ENCODE measurements at regions of chr5 and their contacts with region 1.

Region 1: DNA sequence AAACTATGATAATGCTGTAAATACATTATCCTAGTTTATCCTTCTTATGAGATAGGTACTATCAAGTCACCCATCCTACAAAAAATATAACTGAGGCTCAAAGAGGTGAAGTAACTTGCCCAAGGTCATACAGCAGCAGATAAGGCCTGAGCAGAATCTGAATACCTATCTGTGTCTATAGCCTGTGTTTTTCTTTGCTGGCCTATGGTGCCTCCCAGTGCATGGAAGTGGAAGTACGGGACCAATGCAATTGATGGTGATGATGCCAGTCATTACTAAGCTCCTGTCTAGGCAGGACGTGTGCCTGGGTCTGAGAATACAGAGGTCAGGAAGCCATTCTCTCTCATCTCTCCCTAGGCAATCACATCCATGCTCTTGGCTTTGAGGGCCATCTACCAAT is 67.8 kb downstream of the FAT2 start:
- DNase-seq: peak; percentile 15 to 69
- H3K4me3 ChIP-seq: no peak overlapping the region
- H3K27ac ChIP-seq: no peak overlapping the region
- H3K4me1 ChIP-seq: no peaks in the 10 kb centered on the region
- H3K27me3 ChIP-seq: no peaks in the 10 kb centered on the region
- CTCF ChIP-seq: peak; percentile 62 to 94 (median 89)
- EP300 ChIP-seq: no peak
- POLR2A ChIP-seq: no peak
- RAD21 ChIP-seq: peak; percentile 95 to 97

Region 2: DNA sequence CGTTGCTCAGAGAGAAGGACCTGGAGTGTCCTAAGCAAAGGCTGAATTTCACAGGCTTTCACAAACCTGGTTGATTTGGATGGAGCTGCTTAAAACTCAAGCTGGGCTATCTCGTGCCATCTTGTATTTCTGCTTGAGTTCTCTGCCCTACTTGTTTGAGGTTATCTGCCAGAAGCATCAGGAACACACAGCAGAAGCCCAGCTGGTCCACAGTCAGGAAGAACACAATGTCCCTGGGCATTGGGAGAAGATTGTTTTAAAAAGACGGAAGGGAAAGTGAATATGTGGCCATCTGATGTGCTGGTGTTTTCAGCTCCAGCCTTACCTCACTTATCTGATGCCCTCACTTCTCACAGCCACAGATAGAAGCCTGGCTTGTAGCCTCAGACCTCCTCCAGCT is 108.8 kb before region 1 on chr5:
- CTCF ChIA-PET with region 1: no interaction called
- POLR2A ChIA-PET with region 1: no interaction called
- DNase-seq: no peak
- H3K4me3 ChIP-seq: no peak overlapping the region
- H3K27ac ChIP-seq: no peak overlapping the region
- H3K4me1 ChIP-seq: no peaks in the 10 kb centered on the region
- H3K27me3 ChIP-seq: no peaks in the 10 kb centered on the region
- CTCF ChIP-seq: no peak
- EP300 ChIP-seq: no peak
- POLR2A ChIP-seq: no peak
- RAD21 ChIP-seq: no peak

Region 3: DNA sequence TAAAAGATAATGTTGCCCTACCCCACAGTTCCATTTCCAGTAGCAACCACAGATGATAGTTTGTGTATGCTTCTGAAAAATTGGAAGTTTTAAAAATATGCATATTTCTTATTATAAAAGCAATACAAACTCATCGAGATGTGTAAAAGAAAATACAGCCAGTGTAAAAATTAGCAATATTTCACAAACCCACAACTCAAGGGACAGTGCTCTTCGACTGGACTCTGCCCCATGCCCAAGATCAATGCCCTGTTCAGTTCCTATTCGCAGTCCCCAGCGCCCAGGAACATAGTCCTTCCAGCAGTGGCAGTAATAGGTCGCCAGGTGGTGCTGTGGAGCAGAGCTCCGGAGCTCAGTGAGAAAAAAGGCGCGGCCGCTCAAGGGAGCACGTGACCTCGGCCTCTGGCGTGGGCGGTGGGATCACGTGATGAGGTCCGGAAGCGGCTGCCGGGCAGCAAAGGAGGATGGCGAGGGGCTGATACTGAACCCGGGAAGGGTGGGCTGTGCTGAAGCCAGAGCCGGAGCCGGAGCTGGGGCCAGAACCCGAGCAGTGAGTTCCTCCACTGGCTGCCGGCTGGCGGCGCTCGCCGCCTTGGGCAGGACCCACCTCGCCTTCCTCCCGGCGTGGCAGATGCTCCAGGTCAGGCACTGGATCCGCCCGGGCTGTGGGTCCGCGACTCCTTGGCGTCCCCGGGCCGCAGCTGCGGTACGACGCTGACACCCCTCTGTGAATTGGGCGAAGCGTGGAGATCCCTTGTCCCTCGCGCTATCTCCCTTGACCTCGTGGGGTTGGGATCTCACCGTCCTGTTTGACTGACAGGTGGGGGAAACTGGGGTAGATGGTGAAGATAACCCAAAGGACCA is 75.9 kb before region 1 on chr5 and contains the start of gene SLC36A1:
- CTCF ChIA-PET with region 1: interaction called, 22 read pairs
- POLR2A ChIA-PET with region 1: no interaction called
- DNase-seq: peak; percentile 93 to 98
- H3K4me3 ChIP-seq: peak within 1 kb of the TSS; percentile 45 to 81 (median 72)
- H3K27ac ChIP-seq: no peak within 1 kb of the TSS
- H3K4me1 ChIP-seq: peaks cover 0 to 10% (median 4%) of the 10 kb centered on the region in 4 experiments; a peak in 4 of 7 replicates
- H3K27me3 ChIP-seq: no peaks in the 10 kb centered on the region
- CTCF ChIP-seq: peak; percentile 76 to 80 (median 78)
- EP300 ChIP-seq: no peak; a peak in 1 of 3 replicates
- POLR2A ChIP-seq: peak in 1 of 2 experiments; percentile 67; a peak in 2 of 3 replicates
- RAD21 ChIP-seq: peak; percentile 64 to 76
- total RNA-seq, gene SLC36A1: 6.6 and 9.1 TPM in 2 replicates

Region 4: DNA sequence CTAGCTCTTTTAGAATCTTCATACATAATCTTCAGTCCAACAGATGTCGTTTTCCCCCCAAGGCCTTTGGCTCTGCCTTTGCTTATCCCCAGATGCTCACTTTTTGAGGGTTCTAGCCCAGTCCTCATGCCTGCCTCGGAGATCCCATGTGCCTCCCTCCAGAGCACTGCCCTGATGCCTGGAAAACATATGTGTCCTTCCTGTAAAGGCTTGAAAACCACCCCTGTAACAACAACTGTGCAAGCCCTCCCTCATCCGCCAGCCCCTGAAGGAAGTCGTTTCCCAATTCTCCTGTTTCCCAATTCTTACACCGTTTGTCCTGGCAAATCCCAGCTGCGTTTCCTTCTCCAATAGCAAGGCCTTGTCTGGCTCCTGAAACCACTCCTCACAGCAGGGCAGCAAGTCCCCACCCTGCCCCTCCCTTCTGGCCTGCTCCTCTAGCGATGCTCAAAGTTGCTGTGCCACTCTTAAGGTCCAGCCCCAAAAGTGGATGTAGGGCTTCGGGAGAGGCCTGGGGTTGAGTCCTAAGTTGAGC is 23.8 kb before region 1 on chr5:
- CTCF ChIA-PET with region 1: interaction called, 106 read pairs
- POLR2A ChIA-PET with region 1: no interaction called
- DNase-seq: no peak
- H3K4me3 ChIP-seq: no peak overlapping the region
- H3K27ac ChIP-seq: no peak overlapping the region
- H3K4me1 ChIP-seq: peaks cover 0 to 4% (median under 1%) of the 10 kb centered on the region in 4 experiments; a peak in 3 of 7 replicates
- H3K27me3 ChIP-seq: no peaks in the 10 kb centered on the region
- CTCF ChIP-seq: no peak
- EP300 ChIP-seq: no peak
- POLR2A ChIP-seq: no peak
- RAD21 ChIP-seq: no peak

Region 5: GRCh38 chr5:151534350-151534749 is 11.0 kb after region 1 on chr5:
- CTCF ChIA-PET with region 1: interaction called, 17 read pairs
- POLR2A ChIA-PET with region 1: no interaction called
- DNase-seq: peak in 1 of 2 experiments; percentile 56
- H3K4me3 ChIP-seq: no peak overlapping the region
- H3K27ac ChIP-seq: no peak overlapping the region
- H3K4me1 ChIP-seq: peaks cover 0 to 6% (median 2%) of the 10 kb centered on the region in 4 experiments; a peak in 4 of 7 replicates
- H3K27me3 ChIP-seq: no peaks in the 10 kb centered on the region
- CTCF ChIP-seq: no peak
- EP300 ChIP-seq: no peak
- POLR2A ChIP-seq: no peak
- RAD21 ChIP-seq: no peak

Region 6: GRCh38 chr5:151602806-151603205 is 79.5 kb after region 1 on chr5:
- CTCF ChIA-PET with region 1: interaction called, 10 read pairs
- POLR2A ChIA-PET with region 1: no interaction called
- DNase-seq: no peak
- H3K4me3 ChIP-seq: no peak overlapping the region
- H3K27ac ChIP-seq: no peak overlapping the region
- H3K4me1 ChIP-seq: peaks cover under 1 to 3% (median 2%) of the 10 kb centered on the region in 4 experiments; a peak in 3 of 7 replicates
- H3K27me3 ChIP-seq: no peaks in the 10 kb centered on the region; a peak in 1 of 7 replicates
- CTCF ChIP-seq: no peak
- EP300 ChIP-seq: no peak
- POLR2A ChIP-seq: no peak
- RAD21 ChIP-seq: no peak

Region 7: DNA sequence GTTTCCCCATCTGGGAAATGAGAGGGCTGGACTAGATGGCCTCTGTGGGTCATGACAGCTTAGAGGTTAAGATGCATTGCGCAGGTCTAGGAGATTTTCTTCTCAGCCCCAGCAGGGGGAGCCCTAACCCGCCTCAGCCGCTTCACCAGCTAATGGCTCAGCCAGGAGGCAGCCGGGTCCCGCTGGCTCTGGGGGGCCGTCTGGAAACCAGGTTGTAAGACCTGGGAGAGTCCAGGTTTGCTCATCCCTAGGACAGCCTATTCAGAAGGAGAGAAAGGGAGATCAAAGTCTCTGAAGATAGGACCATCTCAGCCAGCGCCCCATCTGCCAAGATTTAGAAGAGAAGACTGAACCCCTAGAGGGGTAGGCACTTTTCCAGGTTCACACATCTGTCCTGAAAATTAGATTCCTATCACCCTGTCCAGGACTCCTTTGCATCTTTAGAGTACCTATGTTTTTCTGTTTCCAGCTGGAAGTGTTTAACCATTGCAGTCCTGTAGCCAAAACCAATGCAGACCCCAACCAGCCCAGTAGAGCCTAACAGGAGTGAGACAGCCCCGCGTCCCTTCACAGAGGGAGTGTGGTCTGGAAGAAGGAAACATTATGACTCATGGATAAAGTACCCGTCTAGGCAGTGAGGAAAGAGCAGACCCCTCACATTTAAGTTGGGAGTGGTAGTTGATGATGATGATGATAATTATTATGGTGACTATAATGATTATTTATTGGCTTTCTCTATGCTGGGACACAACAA is 135.8 kb after region 1 on chr5:
- CTCF ChIA-PET with region 1: interaction called, 19 read pairs
- POLR2A ChIA-PET with region 1: no interaction called
- DNase-seq: peak; percentile 77 to 96
- H3K4me3 ChIP-seq: no peak overlapping the region
- H3K27ac ChIP-seq: no peak overlapping the region
- H3K4me1 ChIP-seq: peaks cover 0 to 5% (median 0%) of the 10 kb centered on the region in 4 experiments; a peak in 1 of 7 replicates
- H3K27me3 ChIP-seq: no peaks in the 10 kb centered on the region
- CTCF ChIP-seq: peak; percentile 76 to 98 (median 87)
- EP300 ChIP-seq: no peak
- POLR2A ChIP-seq: no peak
- RAD21 ChIP-seq: peak; percentile 92 to 99

Region 8: DNA sequence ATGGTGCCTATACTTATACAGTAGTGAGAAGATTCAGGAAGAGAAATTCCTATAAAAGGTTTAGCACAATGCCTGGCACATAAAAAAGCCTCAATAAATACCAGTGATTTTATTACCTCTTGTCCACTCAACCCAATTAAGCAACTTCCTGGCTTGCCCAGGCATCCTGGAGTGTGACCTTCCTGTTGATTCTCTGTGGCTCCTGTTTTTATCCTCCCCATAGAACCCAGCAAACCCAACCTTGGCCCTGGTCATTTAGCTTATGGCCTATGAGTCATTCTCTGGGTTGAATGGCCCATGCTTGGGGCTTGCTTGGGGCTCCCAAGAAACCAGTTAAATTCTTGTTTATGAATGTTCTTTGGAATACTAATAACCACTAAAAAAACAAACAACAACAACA is 184.8 kb after region 1 on chr5:
- CTCF ChIA-PET with region 1: no interaction called
- POLR2A ChIA-PET with region 1: no interaction called
- DNase-seq: no peak
- H3K4me3 ChIP-seq: no peak overlapping the region
- H3K27ac ChIP-seq: no peak overlapping the region
- H3K4me1 ChIP-seq: no peaks in the 10 kb centered on the region
- H3K27me3 ChIP-seq: peaks cover 0 to 1% (median 0%) of the 10 kb centered on the region in 4 experiments; a peak in 1 of 7 replicates
- CTCF ChIP-seq: no peak
- EP300 ChIP-seq: no peak
- POLR2A ChIP-seq: no peak
- RAD21 ChIP-seq: no peak

Region 9: DNA sequence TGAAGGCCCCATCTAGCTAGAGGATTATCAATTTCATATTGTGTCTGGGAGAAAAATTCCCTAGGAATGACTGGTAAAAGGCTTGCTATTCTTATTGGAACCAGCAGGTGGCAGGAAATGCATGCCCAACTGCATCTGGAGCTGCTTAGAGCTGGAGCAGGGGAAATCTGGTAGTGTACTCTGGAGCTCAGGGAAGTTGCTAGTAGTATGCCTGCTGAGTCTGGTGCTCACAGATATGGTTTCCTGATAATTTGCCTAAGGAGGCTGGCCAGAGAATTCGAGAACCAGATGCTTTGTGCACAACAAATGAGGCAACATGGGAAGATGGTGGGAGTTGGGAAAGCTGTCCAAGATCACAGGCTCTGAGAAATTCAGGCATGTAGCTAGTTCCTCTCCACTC is 302.1 kb after region 1 on chr5:
- CTCF ChIA-PET with region 1: no interaction called
- POLR2A ChIA-PET with region 1: no interaction called
- DNase-seq: peak; percentile 13 to 72
- H3K4me3 ChIP-seq: no peak overlapping the region
- H3K27ac ChIP-seq: no peak overlapping the region
- H3K4me1 ChIP-seq: peaks cover 0 to 4% (median 1%) of the 10 kb centered on the region in 4 experiments; a peak in 3 of 7 replicates
- H3K27me3 ChIP-seq: no peaks in the 10 kb centered on the region
- CTCF ChIP-seq: peak; percentile 52 to 91 (median 82)
- EP300 ChIP-seq: no peak
- POLR2A ChIP-seq: no peak
- RAD21 ChIP-seq: peak; percentile 99 to 100